OCI-LY7 (cell line): ENCODE measurements at regions of chr6 and their contacts with region 1.

Region 1: DNA sequence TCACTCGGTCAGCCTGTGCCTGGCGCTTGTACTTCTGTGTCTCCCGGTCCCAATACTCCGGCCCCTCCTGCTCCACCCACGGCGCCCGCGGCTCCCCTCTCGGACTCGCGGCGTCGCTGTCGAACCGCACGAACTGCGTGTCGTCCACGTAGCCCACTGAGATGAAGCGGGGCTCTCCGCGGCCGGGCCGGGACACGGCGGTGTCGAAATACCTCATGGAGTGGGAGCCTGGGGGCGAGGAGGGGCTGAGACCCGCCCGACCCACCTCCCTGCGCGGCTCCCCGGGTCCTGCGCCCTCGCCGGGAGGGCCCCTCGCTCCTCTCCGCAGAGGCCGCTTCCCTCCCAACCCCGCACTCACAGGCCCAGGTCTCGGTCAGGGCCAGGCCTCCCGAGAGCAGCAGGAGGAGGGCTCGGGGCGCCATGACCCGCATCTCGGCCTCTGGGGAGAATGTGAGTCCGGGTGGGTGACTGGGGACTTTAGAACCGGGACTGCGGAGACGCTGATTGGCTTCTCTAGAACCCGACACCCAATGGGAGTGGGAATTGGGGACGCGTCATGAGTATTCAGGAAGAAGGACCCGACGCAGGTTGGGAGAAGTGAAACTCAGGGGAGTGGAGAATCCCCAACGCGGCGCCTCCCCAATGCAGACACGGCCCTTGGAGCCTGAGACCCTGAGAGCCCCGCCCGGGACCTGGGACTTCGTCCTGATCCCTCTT is at the start of gene HLA-C:
- DNase-seq: peak; percentile 97
- H3K4me3 ChIP-seq: peak within 1 kb of the TSS; percentile 91
- H3K27ac ChIP-seq: peak within 1 kb of the TSS; percentile 61
- H3K4me1 ChIP-seq: peaks cover 55% of the 10 kb centered on the region
- CTCF ChIP-seq: no peak
- total RNA-seq, gene HLA-C: 333 and 406 TPM in 2 replicates

Region 2: DNA sequence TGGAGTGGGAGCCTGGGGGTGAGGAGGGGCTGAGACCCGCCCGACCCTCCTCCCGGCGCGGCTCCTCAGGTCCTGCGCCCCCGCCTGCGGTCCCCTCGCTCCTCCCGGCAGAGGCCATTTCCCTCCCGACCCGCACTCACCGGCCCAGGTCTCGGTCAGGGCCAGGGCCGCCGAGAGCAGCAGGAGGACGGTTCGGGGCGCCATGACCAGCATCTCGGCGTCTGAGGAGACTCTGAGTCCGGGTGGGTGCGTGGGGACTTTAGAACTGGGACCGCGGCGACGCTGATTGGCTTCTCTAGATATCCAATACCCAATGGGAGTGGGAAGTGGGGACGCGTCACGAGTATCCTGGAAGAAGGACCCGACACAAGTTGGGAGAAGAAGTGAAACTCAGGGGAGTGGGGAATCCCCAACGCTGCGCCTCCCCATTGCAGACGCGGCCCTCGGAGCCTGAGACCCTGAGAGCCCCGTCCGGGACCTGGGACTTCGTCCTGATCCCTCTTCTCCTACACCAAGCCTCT is 85.2 kb after region 1 on chr6 and contains the start of gene HLA-B:
- CTCF ChIA-PET with region 1: no interaction called
- POLR2A ChIA-PET with region 1: no interaction called
- intact Hi-C with region 1: loop called (anchors 2 kb)
- DNase-seq: peak; percentile 90
- H3K4me3 ChIP-seq: peak within 1 kb of the TSS; percentile 95
- H3K27ac ChIP-seq: peak within 1 kb of the TSS; percentile 51
- H3K4me1 ChIP-seq: peaks cover 55% of the 10 kb centered on the region
- CTCF ChIP-seq: no peak
- total RNA-seq, gene HLA-B: 223 and 258 TPM in 2 replicates